GM10248 (cell line): ENCODE measurements at regions of chr19 and their contacts with region 1.

Region 1: DNA sequence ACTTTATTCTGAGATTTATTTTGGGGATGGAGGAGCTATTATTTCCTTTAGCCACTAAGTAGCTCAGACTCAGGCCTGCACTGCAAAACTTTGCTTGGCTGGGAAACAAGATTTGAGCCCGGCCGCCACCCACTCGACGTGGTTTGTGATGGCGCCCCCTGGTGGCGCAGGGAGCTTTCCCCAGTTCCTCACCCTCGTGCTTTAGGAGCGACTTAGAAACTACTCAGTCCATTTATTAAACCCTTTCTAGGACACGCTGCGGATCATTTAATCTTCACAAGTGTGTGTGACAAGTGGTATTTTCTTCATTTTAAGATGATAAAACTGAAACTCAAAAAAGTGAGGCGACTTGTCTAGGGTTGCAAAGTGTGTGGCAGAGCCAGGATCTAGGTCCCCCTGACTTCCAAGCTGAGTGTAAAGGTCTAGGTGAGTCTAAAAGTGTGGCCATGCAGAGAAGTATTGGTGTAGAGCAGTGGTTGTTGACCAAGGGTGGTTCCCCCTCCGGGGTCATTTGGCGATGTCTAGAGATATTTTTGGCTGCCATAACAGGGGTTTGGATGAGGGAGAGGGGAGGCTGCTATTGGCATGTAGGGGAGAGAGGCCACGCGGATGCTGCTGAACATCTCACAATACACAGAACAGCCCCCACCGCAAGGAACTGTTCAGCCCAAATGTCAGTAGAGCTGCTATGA is 2.2 kb downstream of the CXCL17 start:
- DNase-seq: peak; percentile 75
- CTCF ChIP-seq: peak; percentile 88

Region 2: GRCh38 chr19:42360787-42361544 is 79.5 kb before region 1 on chr19:
- CTCF ChIA-PET with region 1: no interaction called
- POLR2A ChIA-PET with region 1: no interaction called
- DNase-seq: no peak
- CTCF ChIP-seq: no peak

Region 3: DNA sequence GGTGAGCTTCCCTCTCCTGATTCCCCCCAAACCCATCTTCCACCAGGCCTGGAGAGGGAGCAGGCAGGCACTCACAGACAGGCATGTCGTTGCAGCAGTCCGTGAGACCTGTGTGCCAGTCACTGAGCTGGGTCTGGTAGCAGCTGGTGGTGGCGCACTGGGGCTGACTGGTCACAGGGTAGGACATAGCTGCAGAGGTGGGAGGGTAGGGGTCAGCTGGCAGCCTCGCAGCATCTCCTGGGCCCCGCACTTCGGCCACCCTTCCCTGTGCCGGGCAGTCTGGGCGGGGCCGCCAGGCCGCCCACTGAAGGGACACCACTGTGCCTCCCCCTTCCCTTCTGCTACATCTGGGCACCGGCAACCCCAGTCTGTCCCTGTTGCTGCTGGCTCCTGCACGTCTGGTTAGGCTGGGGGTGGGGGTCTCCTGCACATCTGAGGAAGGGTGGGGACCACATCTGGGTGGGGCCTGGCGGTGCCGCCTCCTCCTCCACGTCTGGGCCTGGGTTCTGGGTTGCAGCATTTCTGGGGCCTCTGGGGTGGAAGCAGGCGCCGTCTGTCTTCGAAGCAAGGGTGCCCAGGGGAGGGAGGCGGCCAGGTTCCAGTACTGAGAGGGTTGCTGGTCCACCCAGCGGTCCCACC is 51.5 kb before region 1 on chr19:
- CTCF ChIA-PET with region 1: no interaction called
- POLR2A ChIA-PET with region 1: no interaction called
- DNase-seq: no peak
- CTCF ChIP-seq: no peak

Region 4: DNA sequence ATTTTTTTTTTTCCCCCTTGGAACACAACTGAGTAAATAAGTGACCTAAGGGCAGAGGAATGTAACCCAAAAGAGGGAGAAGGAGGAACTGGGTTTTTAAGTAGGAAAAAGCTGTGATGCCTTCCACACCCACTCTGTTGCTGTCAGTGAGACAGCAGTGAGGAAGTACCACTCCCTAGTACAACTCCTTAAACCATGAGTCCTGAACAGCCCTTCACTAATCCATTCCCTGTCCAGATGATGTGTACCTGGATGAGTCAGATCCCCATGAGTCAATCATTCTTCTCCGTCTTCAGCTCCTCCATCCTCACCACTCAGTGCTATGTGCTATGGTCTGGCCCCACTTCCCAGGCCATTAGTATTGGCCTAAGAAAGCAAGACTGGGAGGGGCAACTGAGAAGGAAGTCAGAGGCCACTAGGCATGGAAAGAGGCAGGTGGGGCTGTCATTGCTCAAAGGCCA is 15.1 kb after region 1 on chr19:
- CTCF ChIA-PET with region 1: interaction called, 84 read pairs
- POLR2A ChIA-PET with region 1: no interaction called
- DNase-seq: no peak
- CTCF ChIP-seq: no peak

Region 5: GRCh38 chr19:42468273-42468796 is 27.8 kb after region 1 on chr19:
- CTCF ChIA-PET with region 1: interaction called, 18 read pairs
- POLR2A ChIA-PET with region 1: no interaction called
- DNase-seq: no peak
- CTCF ChIP-seq: no peak

Region 6: DNA sequence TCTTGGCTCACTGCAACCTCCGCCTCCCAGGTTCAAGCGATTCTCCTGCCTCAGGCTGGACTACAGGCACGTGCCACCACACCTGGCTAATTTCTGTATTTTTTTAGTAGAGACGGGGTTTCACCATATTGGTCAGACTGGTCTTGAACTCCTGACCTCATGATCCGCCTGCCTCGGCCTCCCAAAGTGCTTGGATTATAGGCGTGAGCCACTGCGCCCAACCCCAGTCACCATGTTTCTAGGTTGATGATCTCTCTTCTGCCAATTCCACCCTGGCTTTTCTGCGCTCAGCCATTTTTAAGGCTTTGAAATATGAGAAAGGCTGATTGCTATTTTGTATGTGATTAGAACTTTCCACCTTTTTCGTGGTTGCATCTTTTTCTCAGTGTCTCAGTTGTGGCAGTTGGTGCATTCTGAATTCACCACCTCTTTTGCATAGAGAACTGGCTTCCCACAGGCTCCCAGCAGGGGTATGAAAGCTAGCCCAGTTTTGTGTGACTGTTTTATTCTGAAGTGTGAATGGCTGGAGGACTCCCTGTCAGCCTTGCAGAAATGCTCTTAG is 72.3 kb after region 1 on chr19:
- CTCF ChIA-PET with region 1: interaction called, 12 read pairs
- POLR2A ChIA-PET with region 1: no interaction called
- DNase-seq: peak; percentile 70
- CTCF ChIP-seq: no peak

Region 7: GRCh38 chr19:42563352-42564210 is 123.1 kb after region 1 on chr19:
- CTCF ChIA-PET with region 1: interaction called, 10 read pairs
- POLR2A ChIA-PET with region 1: no interaction called
- DNase-seq: peak; percentile 68
- CTCF ChIP-seq: peak; percentile 67